ENCODE measurements at regions of chr2 and their contacts with region 1.

Region 1: GRCh38 chr2:237092920-237093781 is 7.5 kb downstream of the COPS8 start:
- DNase-seq: peak; percentile 80 to 83
- ATAC-seq: peak; percentile 61 to 64
- H3K4me3 ChIP-seq: peak overlapping the region in 2 of 4 donors; percentile 9 to 34
- H3K27ac ChIP-seq: peak overlapping the region; percentile 93 to 95 (median 94)
- H3K4me1 ChIP-seq: peaks cover 89 to 94% of the 10 kb centered on the region in 2 donors
- H3K27me3 ChIP-seq: no peaks in the 10 kb centered on the region
- CTCF ChIP-seq: peak; percentile 66 to 83 (median 77)
- POLR2A ChIP-seq: no peak

Region 2: GRCh38 chr2:236240228-236241038 is 852.7 kb before region 1 on chr2:
- in situ Hi-C with region 1: no loop called
- intact Hi-C with region 1: loop called (anchors 5 kb)
- DNase-seq: peak; percentile 85 to 90
- ATAC-seq: peak; percentile 88 to 90
- H3K4me3 ChIP-seq: peak overlapping the region in 3 of 4 donors; percentile 5 to 22 (median 16)
- H3K27ac ChIP-seq: peak overlapping the region; percentile 77 to 90 (median 86)
- H3K4me1 ChIP-seq: peaks cover 23 to 45% of the 10 kb centered on the region in 2 donors
- H3K27me3 ChIP-seq: peaks cover 0 to 12% (median 0%) of the 10 kb centered on the region in 3 donors
- CTCF ChIP-seq: no peak
- POLR2A ChIP-seq: peak; percentile 14 to 51

Region 3: DNA sequence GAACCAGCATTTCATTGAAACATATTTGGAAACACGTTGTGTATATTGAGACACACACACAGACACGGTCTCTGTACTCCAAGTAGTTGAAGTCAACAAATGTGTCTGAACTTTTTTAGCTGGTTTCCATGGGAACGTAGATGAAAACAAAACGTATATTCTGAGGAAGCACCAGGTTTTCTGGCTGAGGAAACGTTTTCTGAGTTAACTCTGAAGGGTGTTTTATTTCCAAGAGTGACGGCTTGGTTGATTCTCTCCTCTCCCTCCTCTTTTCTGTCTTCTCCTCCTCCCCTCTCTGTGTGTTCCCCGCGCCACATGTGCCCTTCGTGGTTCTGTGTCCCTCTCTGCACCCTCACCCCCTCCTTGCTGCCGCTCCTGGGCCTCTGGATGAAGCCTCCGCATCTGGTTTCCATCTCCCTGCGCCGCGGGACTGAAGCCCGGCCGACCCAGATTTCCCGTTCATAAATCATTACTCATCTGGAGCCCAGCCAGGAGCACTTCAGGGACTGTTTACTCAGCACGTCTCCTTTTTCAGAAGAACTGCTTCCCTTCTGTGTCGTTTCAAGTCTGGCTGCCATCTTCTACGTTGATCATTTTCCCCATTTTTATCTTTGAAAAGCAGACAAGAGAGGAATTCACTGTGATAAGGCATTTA is 198.1 kb after region 1 on chr2:
- in situ Hi-C with region 1: loop called in 1 of 4 experiments (anchors 10 kb)
- intact Hi-C with region 1: no loop called
- DNase-seq: peak; percentile 94 to 96
- ATAC-seq: peak; percentile 90 to 93
- H3K4me3 ChIP-seq: peak overlapping the region in 2 of 4 donors; percentile 8 to 23
- H3K27ac ChIP-seq: peak overlapping the region; percentile 77 to 85 (median 80)
- H3K4me1 ChIP-seq: peaks cover 23 to 27% of the 10 kb centered on the region in 2 donors
- H3K27me3 ChIP-seq: no peaks in the 10 kb centered on the region
- CTCF ChIP-seq: no peak
- POLR2A ChIP-seq: peak in 1 of 2 donors; percentile 34

Region 4: GRCh38 chr2:237403024-237403882 is 310.1 kb after region 1 on chr2:
- in situ Hi-C with region 1: no loop called
- intact Hi-C with region 1: loop called (anchors 2 kb)
- DNase-seq: peak; percentile 65 to 79
- ATAC-seq: peak; percentile 85
- H3K4me3 ChIP-seq: peak overlapping the region in 1 of 4 donors; percentile 1
- H3K27ac ChIP-seq: peak overlapping the region; percentile 71 to 87 (median 78)
- H3K4me1 ChIP-seq: peaks cover 5 to 19% of the 10 kb centered on the region in 2 donors
- H3K27me3 ChIP-seq: no peaks in the 10 kb centered on the region
- CTCF ChIP-seq: no peak
- POLR2A ChIP-seq: no peak

Region 5: DNA sequence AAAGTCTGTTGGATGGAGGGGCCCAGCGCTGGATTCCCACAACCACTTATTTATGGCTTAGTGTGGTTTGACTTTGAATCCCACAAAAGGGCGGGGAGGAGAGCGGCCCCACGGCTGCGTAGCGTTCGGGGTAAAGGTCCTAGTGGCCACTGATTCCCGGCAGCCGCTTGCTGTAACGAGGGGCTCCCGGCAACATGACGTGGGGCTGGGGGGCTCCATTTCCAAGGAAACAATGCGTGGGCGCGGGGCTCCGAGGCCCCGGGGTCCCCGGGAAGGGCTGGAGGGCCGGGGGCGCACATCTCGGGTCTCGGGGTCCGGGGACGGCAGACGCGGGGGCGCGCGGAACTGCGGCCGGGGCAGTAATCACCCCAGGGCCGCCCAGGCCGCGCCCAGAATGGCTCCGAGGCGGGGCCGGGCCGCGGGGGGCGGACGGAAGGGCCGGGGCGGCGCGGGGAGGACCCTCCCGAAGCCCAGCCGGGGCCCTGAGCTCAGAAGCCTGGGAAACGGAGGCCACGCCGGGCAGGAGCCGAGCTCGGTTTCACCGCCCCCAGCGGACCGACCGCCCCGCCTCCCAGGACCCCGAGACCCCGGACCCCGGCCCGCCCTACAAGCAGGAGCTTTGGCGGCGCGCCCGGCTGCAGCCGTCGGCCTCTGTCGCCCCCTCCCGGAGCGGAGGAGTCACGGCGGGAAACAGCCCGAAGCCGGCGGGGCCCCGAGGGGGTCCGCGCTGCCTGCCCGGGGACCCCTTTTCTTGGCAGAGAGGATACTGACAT is 382.0 kb after region 1 on chr2:
- in situ Hi-C with region 1: no loop called
- intact Hi-C with region 1: loop called (anchors 2 kb)
- DNase-seq: peak; percentile 56 to 69
- ATAC-seq: peak; percentile 45 to 72
- H3K4me3 ChIP-seq: peak overlapping the region; percentile 58 to 85 (median 67)
- H3K27ac ChIP-seq: peak overlapping the region; percentile 78 to 93 (median 89)
- H3K4me1 ChIP-seq: peaks cover 10 to 28% of the 10 kb centered on the region in 2 donors
- H3K27me3 ChIP-seq: peaks cover 0 to 8% (median 5%) of the 10 kb centered on the region in 3 donors
- CTCF ChIP-seq: peak; percentile 91 to 99 (median 97)
- POLR2A ChIP-seq: peak; percentile 41 to 69

Region 6: GRCh38 chr2:237895544-237896506 is 802.7 kb after region 1 on chr2:
- in situ Hi-C with region 1: no loop called
- intact Hi-C with region 1: loop called (anchors 5 kb)
- DNase-seq: peak; percentile 88 to 95
- ATAC-seq: peak; percentile 81 to 85
- H3K4me3 ChIP-seq: peak overlapping the region in 1 of 4 donors; percentile 8
- H3K27ac ChIP-seq: peak overlapping the region; percentile 98 to 99 (median 98)
- H3K4me1 ChIP-seq: peaks cover 53 to 66% of the 10 kb centered on the region in 2 donors
- H3K27me3 ChIP-seq: no peaks in the 10 kb centered on the region
- CTCF ChIP-seq: no peak
- POLR2A ChIP-seq: peak; percentile 58 to 71

Measured in gastrocnemius medialis (tissue), 4 donors.